IMR-90 (cell line): ENCODE measurements at regions of chr12 and their contacts with region 1.

Region 1: GRCh38 chr12:6688999-6689882 is at the start of gene ZNF384:
- DNase-seq: peak; percentile 99
- ATAC-seq: peak; percentile 83
- H3K4me3 ChIP-seq: peak within 1 kb of the TSS; percentile 83
- H3K27ac ChIP-seq: peak within 1 kb of the TSS; percentile 89
- H3K4me1 ChIP-seq: peaks cover 5% of the 10 kb centered on the region
- H3K27me3 ChIP-seq: no peaks in the 10 kb centered on the region
- CTCF ChIP-seq: no peak
- POLR2A ChIP-seq: peak; percentile 81
- RAD21 ChIP-seq: no peak
- total RNA-seq, gene ZNF384: 16.3 and 17.5 TPM in 2 replicates

Region 2: GRCh38 chr12:5661811-5662210 is 1027.4 kb before region 1 on chr12:
- CTCF ChIA-PET with region 1: no interaction called
- POLR2A ChIA-PET with region 1: no interaction called
- dilution Hi-C with region 1: no loop called
- in situ Hi-C with region 1: no loop called
- intact Hi-C with region 1: no loop called
- DNase-seq: no peak
- ATAC-seq: no peak
- H3K4me3 ChIP-seq: no peak overlapping the region
- H3K27ac ChIP-seq: no peak overlapping the region
- H3K4me1 ChIP-seq: peaks cover 9% of the 10 kb centered on the region
- H3K27me3 ChIP-seq: no peaks in the 10 kb centered on the region
- CTCF ChIP-seq: no peak
- POLR2A ChIP-seq: no peak
- RAD21 ChIP-seq: no peak

Region 3: DNA sequence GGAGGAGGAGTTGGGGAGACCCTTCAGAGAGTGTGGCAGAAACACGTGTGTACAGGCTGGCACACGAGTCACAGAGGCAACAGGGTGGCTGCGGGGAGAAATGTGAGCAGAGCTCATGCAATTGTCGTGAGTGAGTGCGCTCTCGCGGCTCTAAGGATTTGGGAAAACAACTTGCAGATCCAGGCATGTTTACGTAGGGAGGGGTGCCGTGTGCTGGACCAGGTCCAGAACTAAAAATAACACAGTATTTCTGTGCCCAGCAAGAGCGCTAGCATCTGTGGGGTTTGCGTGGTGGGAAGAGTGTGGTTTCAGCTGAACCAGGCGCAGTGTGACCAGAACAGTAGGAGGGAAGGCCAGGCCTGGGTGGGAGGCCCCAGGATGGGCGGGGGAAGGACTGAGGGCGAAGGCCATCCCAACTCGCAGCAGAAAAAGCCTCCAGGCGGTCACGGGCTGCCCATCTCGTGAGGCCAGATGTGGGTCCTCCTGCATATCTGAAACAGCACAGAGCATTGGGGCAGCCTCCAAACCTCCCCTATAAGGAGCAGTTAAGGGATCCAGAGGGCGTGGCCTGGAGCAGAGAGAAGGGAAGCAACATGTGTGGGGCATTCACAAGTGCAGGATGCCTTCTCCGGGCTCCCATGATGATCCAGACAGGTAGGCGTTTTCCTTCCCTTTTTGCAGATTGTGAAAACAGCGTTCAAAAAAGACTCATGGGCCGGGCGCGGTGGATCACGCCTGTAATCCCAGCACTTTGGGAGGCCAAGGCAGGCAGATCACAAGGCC is 506.9 kb before region 1 on chr12:
- CTCF ChIA-PET with region 1: no interaction called
- POLR2A ChIA-PET with region 1: no interaction called
- dilution Hi-C with region 1: no loop called
- in situ Hi-C with region 1: no loop called
- intact Hi-C with region 1: no loop called
- DNase-seq: peak; percentile 68
- ATAC-seq: peak; percentile 24
- H3K4me3 ChIP-seq: no peak overlapping the region
- H3K27ac ChIP-seq: peak overlapping the region; percentile 38
- H3K4me1 ChIP-seq: peaks cover 33% of the 10 kb centered on the region
- H3K27me3 ChIP-seq: no peaks in the 10 kb centered on the region
- CTCF ChIP-seq: no peak
- POLR2A ChIP-seq: no peak
- RAD21 ChIP-seq: no peak

Region 4: GRCh38 chr12:6554168-6555017 is 134.8 kb before region 1 on chr12:
- CTCF ChIA-PET with region 1: no interaction called
- POLR2A ChIA-PET with region 1: no interaction called
- dilution Hi-C with region 1: no loop called
- in situ Hi-C with region 1: no loop called
- intact Hi-C with region 1: loop called (anchors 10 kb)
- DNase-seq: peak; percentile 72
- ATAC-seq: peak; percentile 40
- H3K4me3 ChIP-seq: peak overlapping the region; percentile 82
- H3K27ac ChIP-seq: peak overlapping the region; percentile 46
- H3K4me1 ChIP-seq: peaks cover 40% of the 10 kb centered on the region
- H3K27me3 ChIP-seq: no peaks in the 10 kb centered on the region
- CTCF ChIP-seq: peak; percentile 60
- POLR2A ChIP-seq: no peak
- RAD21 ChIP-seq: peak; percentile 43

Region 5: GRCh38 chr12:6613776-6614512 is 75.3 kb before region 1 on chr12:
- CTCF ChIA-PET with region 1: interaction called, 3 read pairs
- POLR2A ChIA-PET with region 1: interaction called, 8 read pairs
- dilution Hi-C with region 1: no loop called
- in situ Hi-C with region 1: no loop called
- intact Hi-C with region 1: loop called (anchors 2 kb)
- DNase-seq: peak; percentile 99
- ATAC-seq: peak; percentile 83
- H3K4me3 ChIP-seq: no peak overlapping the region
- H3K27ac ChIP-seq: peak overlapping the region; percentile 88
- H3K4me1 ChIP-seq: peaks cover 23% of the 10 kb centered on the region
- H3K27me3 ChIP-seq: no peaks in the 10 kb centered on the region
- CTCF ChIP-seq: 0 out of 2 replicates have a peak, but pooled peaks have one; percentile 8
- POLR2A ChIP-seq: no peak
- RAD21 ChIP-seq: no peak

Region 6: DNA sequence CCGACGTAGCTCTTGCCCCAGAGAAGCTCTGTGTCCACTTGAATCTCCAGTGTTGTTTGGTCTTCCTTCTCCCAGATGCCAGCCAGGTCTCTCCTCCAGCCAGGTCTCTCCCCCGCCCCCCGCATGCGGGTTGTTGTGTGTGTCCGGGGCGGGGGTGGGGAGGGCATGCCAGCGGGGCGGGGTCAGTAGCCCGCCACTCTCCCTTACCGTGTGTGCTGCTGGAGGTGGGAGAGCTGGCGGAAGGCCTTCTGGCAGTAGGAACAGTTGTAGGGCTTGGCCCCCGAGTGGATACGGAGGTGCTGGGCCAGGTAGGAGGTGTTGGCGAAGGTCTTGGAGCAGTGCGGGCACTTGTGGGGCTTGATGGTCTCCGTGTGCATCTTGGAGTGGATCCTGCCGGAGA is 17.1 kb before region 1 on chr12:
- CTCF ChIA-PET with region 1: interaction called, 3 read pairs
- POLR2A ChIA-PET with region 1: no interaction called
- dilution Hi-C with region 1: no loop called
- in situ Hi-C with region 1: no loop called
- intact Hi-C with region 1: loop called (anchors 1 kb)
- DNase-seq: no peak
- ATAC-seq: no peak
- H3K4me3 ChIP-seq: no peak overlapping the region
- H3K27ac ChIP-seq: no peak overlapping the region
- H3K4me1 ChIP-seq: no peaks in the 10 kb centered on the region
- H3K27me3 ChIP-seq: no peaks in the 10 kb centered on the region
- CTCF ChIP-seq: no peak
- POLR2A ChIP-seq: no peak
- RAD21 ChIP-seq: no peak

Region 7: DNA sequence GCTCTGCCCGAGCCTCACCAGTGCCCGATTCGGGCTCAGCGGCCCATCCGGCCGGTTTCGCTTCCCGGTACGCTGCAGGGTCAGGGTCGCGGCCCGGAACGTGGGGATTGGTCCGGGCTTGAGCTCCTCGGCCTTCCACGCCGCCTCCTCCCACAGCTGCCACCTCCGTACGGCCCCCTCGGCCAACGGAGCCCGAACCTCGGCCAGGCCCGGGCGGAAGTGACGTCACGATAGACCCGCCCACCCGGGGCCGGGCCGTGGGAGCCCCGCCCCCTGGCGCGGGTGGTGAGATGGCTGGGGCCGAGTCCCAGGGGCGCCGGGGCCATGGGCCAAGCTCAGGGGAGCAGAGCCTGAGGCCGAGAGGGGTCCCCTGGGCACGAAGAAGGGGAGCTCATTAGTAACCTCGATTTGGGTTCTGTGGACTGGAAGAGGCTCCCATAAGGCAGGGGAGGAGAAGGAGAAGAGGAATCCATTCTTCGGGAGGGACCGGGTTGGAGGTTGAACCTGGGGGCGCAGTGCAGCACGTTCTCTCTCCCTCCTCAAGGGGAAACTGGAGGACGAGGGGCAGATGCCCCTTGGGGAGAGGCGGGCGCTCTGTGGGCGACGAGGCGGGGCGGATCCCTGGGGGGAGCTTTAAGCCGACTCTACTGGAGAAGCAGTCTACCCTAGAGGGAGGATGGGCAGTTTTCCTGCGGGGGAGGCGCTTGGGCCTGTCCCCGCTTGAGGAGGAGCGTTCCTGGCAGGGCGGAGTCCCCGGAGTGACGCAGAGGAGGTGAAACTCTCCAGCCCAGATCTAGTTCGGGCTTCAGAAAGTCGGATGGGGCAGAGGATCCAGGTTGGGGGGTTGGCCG is 63.9 kb after region 1 on chr12 and contains the start of gene MLF2:
- CTCF ChIA-PET with region 1: interaction called, 3 read pairs
- POLR2A ChIA-PET with region 1: no interaction called
- dilution Hi-C with region 1: no loop called
- in situ Hi-C with region 1: no loop called
- intact Hi-C with region 1: loop called (anchors 2 kb)
- DNase-seq: peak; percentile 99
- ATAC-seq: peak; percentile 93
- H3K4me3 ChIP-seq: peak within 1 kb of the TSS; percentile 71
- H3K27ac ChIP-seq: peak within 1 kb of the TSS; percentile 94
- H3K4me1 ChIP-seq: peaks cover 7% of the 10 kb centered on the region
- H3K27me3 ChIP-seq: no peaks in the 10 kb centered on the region
- CTCF ChIP-seq: no peak; the same call in 1 of the 2 replicates
- POLR2A ChIP-seq: no peak; the same call in none of the 2 replicates
- RAD21 ChIP-seq: no peak
- total RNA-seq, gene MLF2: 236 and 244 TPM in 2 replicates

Region 8: DNA sequence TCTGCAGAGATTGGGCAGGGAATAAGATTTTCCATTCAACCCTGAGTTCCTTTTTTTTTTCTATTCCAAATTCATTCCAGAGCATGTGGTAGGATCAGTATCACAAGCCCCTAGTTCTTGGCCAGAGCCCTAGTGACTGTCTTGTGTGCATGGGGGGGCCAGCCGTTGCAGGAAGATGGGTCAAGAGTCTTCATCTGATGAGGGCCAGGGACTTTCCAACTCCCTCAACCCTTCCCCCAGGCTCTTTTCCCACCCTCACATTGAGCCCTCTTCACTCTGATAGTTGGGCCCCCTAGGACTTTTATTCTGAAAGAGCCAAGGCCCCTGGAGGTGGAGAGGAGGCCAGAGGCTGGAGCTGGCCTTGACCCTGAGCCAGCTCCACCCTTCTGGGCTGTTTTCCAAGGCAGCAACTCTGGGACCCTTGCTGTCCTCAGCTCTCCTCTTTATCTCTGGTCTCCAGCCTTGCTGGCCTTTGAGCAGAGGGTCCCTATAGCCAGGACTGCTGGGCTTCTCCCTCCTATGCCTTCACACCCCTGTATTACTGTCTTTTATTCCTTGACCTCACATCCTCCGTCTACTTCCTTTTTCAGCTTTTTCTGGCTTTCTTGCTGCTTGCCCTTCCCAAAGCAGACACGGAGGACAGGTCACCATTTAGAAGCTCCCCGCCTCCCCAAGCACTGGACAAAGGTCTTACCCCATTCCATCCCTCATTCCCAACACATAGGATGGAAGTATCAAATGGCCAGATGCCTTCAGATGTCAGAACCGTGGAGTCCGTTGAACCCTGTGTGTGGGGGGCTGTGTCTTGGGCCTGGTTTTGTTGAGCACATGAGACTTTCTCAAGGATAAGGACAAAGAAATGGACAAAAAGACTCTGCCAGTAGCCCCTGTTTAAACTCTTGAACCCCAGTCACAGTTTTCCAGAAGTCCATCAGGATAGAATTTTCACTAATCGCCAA is 433.8 kb after region 1 on chr12:
- CTCF ChIA-PET with region 1: no interaction called
- POLR2A ChIA-PET with region 1: interaction called, 13 read pairs
- dilution Hi-C with region 1: no loop called
- in situ Hi-C with region 1: no loop called
- intact Hi-C with region 1: no loop called
- DNase-seq: no peak
- ATAC-seq: no peak
- H3K4me3 ChIP-seq: no peak overlapping the region
- H3K27ac ChIP-seq: no peak overlapping the region
- H3K4me1 ChIP-seq: no peaks in the 10 kb centered on the region
- H3K27me3 ChIP-seq: no peaks in the 10 kb centered on the region
- CTCF ChIP-seq: no peak
- POLR2A ChIP-seq: no peak
- RAD21 ChIP-seq: no peak